GM10248 (cell line): ENCODE measurements at regions of chr3 and their contacts with region 1.

Region 1: DNA sequence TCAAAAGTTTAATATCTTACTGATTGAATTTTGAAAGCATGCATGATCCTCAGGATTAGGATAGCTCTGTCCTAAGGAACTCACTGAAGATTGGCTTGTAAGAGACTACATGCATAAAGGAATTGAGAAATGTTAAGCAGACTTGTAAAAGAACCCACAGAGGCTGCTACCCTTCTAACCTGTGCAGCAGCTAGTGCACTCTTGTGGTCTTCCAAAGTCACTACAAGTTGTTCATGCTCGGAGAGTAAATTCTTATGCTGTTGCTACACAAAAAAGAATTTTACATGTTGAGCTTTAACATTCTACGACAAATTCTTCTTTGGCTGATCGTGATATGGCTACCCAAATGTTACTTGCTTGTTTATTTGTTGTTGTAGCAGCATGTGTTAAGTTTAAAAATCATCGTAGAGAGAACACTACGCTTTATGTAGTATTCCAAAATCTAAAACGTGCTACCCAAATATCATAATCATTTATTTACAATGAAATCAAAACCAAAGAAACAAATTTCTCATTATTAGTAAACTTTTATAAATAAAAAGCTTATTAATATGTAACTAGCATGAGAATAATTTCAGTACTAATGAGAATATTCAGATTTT is 55.0 kb downstream of the GOLIM4 start:
- DNase-seq: peak; percentile 26
- CTCF ChIP-seq: peak; percentile 34

Region 2: GRCh38 chr3:168030577-168030976 is 10.1 kb before region 1 on chr3:
- CTCF ChIA-PET with region 1: interaction called, 24 read pairs
- POLR2A ChIA-PET with region 1: no interaction called
- DNase-seq: no peak
- CTCF ChIP-seq: no peak

Region 3: GRCh38 chr3:168071591-168072322 is 31.0 kb after region 1 on chr3:
- CTCF ChIA-PET with region 1: no interaction called
- POLR2A ChIA-PET with region 1: no interaction called
- DNase-seq: no peak
- CTCF ChIP-seq: no peak